GM10248 (cell line): ENCODE measurements at regions of chr10 and their contacts with region 1.

Region 1: GRCh38 chr10:89029785-89030437 is 39.3 kb downstream of the FAS start:
- DNase-seq: peak; percentile 39
- CTCF ChIP-seq: peak; percentile 70

Region 2: DNA sequence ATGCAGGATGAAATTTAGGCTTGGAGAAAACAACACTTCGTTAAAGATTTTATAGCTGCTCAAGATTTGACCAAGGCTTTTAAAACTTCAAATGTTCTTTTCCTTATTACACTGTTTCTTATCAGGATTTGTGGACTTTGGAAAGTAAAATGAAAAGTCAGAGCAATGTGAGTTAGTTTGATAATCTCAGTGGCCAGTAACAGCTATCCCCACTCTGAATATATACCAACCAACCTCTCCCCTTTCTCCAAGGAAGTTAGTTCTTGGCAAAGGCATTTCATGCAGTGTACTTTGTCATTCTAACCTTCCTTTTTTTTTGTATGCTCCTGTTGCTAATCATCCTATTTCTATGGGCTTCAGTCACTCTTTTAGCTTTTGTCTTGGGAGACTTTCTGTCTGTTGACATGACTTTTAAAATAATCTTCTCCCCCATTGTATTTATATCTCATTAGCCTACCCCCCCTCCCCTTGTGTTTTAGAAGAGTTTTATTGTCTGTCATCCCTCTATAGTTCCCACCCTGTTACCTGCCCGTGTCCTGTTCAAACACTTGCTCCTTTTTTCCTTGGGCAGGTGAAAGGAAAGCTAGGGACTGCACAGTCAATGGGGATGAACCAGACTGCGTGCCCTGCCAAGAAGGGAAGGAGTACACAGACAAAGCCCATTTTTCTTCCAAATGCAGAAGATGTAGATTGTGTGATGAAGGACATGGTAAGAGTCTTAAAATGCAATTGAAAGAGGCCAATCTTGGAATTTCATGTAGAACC is 22.6 kb before region 1 on chr10:
- CTCF ChIA-PET with region 1: interaction called, 31 read pairs
- POLR2A ChIA-PET with region 1: no interaction called
- DNase-seq: no peak
- CTCF ChIP-seq: no peak

Region 3: GRCh38 chr10:89042562-89042961 is 12.7 kb after region 1 on chr10:
- CTCF ChIA-PET with region 1: interaction called, 36 read pairs
- POLR2A ChIA-PET with region 1: no interaction called
- DNase-seq: no peak
- CTCF ChIP-seq: no peak

Region 4: DNA sequence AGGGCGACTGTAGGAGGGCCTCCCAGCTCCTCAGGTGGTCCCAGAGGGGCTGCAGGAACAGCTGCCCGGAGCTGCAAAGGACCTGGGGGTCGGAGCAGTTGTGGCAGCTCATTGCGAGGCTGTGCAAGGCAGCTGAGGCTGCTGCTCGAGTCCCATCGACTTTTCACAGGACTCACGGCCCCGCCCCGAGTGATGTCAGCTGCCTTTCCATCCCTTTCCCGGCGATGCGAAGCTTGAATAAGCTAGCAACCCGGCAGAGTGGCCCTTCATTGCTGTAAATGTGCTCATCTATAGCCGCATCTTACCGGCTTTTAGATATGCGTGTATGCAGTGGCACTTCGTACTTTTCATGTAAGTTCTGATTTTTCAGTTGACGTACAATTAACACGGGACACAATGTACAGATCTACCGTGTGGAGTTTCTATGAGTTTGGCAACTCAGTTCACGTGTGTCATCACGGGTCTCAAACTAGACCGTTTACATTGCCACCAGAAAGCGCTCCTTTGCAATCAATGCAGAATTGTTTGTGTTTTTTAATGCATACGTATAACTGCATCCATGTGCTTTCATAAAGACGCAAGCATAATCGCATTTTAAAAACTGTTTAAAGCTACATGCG is 177.4 kb after region 1 on chr10 and contains the start of gene CH25H:
- CTCF ChIA-PET with region 1: interaction called, 32 read pairs
- POLR2A ChIA-PET with region 1: no interaction called
- DNase-seq: peak; percentile 36
- CTCF ChIP-seq: no peak

Region 5: GRCh38 chr10:89301721-89302445 is 272.0 kb after region 1 on chr10 and contains the start of gene IFIT2:
- CTCF ChIA-PET with region 1: no interaction called
- POLR2A ChIA-PET with region 1: no interaction called
- DNase-seq: peak; percentile 59
- CTCF ChIP-seq: no peak